ENCODE measurements at regions of chr1 and their contacts with region 1.

Region 1: DNA sequence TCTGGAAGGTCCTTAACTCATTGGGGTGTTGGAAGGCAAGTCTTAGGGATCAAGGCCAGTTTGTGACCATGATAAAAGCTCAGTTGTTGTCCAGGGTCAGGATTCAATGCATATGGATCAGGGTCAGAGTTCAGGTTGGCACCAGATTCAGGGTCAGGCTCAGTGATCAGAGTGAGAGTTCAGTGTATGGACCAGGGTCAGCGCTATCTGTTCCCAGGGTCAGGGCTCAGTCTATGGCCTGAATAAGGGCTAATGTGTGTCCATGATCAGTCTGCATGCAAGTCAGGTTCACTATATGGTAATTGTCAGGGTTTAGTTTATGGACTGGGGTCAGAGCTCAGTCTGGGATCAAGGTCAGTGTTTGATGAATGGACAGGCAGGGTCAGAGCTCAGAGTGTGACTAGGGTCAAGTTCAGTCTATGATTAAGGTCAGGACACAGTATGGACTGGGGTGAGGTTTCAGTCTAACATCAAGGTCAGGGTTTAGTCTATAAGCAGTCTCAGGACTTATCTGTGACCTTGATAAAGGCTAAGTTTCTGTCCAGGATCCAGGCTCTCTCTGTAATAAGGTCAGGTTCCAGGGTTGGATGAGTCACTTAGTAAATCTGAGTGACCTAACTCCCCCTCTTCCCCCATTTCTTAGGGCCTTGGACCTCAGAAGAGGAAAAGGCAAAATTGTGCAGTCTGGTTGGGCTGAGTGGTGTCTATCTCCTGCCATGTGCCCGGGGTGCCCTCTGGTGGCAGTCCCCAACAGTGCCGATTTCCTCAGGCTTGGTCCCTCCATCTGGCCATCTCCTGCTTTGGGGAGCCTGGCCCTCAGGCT is 23.8 kb downstream of the KNCN start:
- DNase-seq: peak; percentile 51
- ATAC-seq: peak; percentile 76
- H3K4me3 Mint-ChIP-seq: no peak overlapping the region
- H3K27ac Mint-ChIP-seq: no peak overlapping the region
- H3K4me1 Mint-ChIP-seq: peaks cover 1% of the 10 kb centered on the region
- H3K27me3 Mint-ChIP-seq: peaks cover 61% of the 10 kb centered on the region
- CTCF ChIP-seq: no peak

Region 2: DNA sequence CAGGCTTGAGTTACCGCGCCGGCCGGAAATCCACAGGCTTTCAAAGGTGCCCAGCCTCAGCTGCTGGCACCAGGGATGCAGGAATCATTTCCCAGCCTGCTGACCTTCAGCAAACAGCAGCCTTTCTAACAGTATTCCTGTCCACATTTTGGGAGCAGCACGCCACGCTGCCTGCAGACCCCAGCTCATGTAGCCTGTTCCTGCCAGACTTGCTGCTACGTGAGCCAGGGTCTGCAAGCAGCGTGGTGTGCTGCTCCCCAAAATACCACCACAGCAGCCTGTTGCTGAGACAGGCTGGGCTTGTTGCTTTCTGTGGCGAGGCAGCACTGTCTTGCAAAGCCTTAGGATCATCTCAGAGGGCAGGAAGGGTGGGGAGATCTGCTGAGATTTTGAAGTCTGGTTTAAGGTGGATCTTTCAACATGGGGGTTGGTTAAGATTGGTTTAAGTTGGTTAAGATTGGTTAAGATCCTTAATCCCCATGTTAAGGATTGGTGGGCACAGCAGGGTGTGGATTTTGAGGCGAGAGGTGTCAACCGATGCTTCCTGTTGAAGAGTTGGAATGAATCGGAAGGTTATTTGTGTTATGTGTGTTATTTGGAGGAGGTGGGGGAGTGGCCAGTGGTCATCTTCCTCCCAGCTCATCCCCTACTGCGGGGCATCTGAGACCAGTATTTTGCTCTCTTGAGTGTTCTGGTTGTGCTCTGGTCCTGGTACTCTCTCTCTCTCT is 120.6 kb before region 1 on chr1:
- CTCF ChIA-PET with region 1: no interaction called
- POLR2A ChIA-PET with region 1: no interaction called
- intact Hi-C with region 1: loop called (anchors 2 kb)
- DNase-seq: no peak
- ATAC-seq: no peak
- H3K4me3 Mint-ChIP-seq: no peak overlapping the region
- H3K27ac Mint-ChIP-seq: no peak overlapping the region
- H3K4me1 Mint-ChIP-seq: no peaks in the 10 kb centered on the region
- H3K27me3 Mint-ChIP-seq: no peaks in the 10 kb centered on the region
- CTCF ChIP-seq: no peak

Region 3: DNA sequence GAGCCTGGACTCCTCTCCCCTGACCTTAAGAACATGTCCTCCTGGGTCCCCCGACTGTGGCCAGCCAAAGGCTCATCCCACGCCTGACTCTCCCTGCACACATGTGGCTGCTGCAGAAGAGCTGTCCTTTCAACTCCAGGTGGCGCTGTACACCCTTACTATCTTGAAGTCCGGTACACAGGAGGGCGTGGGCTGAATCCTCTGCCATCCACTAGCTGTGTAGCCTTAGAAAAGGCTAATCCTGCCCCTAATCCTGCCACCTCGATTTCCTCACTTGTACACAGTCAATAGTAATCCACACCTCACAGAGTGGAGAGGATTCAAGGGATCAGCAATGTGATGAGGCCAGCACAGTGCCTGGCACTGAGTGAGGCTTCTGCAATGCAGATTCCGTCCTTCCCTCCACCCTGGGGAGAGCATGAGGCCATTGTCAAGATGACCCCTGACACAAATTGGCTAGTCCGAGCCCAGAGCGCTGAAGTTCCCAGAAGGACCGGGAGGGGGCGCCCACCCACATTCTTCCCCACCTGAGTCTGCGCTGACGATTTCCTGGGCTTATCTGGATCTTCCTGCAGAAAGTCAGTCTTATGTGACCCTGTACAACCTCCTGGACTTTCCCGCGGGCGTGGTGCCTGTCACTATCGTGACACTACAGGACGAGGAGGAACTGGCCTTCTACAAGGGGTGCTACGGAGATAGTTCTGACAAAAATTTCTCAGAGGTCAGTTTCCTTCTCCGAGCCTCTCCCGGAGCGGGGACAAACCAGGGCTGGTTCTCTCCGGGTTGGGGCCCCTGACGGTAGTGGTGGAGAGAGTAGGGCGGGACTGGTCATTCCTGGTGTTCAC is 85.1 kb before region 1 on chr1:
- CTCF ChIA-PET with region 1: interaction called, 23 read pairs
- POLR2A ChIA-PET with region 1: no interaction called
- intact Hi-C with region 1: loop called (anchors 1 kb)
- DNase-seq: peak; percentile 63
- ATAC-seq: peak; percentile 78
- H3K4me3 Mint-ChIP-seq: peak overlapping the region; percentile 81
- H3K27ac Mint-ChIP-seq: no peak overlapping the region
- H3K4me1 Mint-ChIP-seq: peaks cover 10% of the 10 kb centered on the region
- H3K27me3 Mint-ChIP-seq: peaks cover 35% of the 10 kb centered on the region
- CTCF ChIP-seq: peak; percentile 96

Region 4: DNA sequence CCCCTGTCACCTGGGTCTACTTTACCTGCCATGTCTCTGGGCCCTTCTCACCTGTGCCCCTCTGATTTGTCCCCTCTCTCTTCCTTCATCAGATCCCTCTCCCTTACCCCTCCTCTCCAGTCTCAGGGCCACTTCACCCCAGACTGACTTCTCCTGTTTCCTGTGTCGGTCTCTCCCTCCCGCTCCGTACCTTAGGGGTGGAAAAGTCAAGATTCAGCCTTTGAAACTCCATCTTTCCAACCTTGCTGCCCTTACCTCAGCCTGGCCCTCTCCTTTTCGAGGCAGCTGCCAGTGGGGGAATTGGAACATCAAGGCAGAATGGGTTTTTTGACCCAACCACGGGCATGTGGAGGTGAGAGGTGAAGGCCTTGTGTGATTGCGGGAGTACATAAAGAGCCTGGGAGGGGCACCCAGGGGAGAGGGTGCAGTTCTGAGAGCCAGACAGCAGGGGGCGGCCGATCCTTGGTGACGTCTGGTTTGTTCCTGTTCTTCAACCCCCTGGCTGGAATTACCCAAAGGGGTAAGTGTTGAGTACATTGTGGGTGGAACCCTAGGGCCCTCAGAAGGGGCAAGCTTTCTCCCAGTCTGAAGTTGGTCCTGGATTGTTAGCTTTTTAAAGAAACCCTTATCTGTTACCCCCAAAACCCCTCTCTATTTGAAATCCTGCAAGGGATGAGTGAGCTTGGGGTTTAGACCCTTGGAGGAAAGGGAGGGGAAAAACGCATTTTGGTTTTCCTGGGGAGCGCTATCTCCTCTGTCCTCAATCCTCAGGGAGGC is 50.3 kb before region 1 on chr1:
- CTCF ChIA-PET with region 1: interaction called, 4 read pairs
- POLR2A ChIA-PET with region 1: no interaction called
- intact Hi-C with region 1: loop called (anchors 1 kb)
- DNase-seq: peak; percentile 67
- ATAC-seq: peak; percentile 96
- H3K4me3 Mint-ChIP-seq: no peak overlapping the region
- H3K27ac Mint-ChIP-seq: no peak overlapping the region
- H3K4me1 Mint-ChIP-seq: peaks cover 40% of the 10 kb centered on the region
- H3K27me3 Mint-ChIP-seq: peaks cover 18% of the 10 kb centered on the region
- CTCF ChIP-seq: peak; percentile 71

Measured in activated B cell treated with CpG ODN at 0.5 μM for 24 hours (primary cell).